ENCODE measurements at regions of chr9 and their contacts with region 1.

Region 1: GRCh38 chr9:8456344-8456743 is 656.8 kb upstream of the DMAC1 start:
- DNase-seq: no peak
- H3K4me3 ChIP-seq: no peak overlapping the region
- H3K27ac ChIP-seq: no peak overlapping the region
- H3K4me1 ChIP-seq: no peaks in the 10 kb centered on the region
- H3K27me3 ChIP-seq: no peaks in the 10 kb centered on the region
- CTCF ChIP-seq: no peak
- POLR2A ChIP-seq: no peak

Region 2: DNA sequence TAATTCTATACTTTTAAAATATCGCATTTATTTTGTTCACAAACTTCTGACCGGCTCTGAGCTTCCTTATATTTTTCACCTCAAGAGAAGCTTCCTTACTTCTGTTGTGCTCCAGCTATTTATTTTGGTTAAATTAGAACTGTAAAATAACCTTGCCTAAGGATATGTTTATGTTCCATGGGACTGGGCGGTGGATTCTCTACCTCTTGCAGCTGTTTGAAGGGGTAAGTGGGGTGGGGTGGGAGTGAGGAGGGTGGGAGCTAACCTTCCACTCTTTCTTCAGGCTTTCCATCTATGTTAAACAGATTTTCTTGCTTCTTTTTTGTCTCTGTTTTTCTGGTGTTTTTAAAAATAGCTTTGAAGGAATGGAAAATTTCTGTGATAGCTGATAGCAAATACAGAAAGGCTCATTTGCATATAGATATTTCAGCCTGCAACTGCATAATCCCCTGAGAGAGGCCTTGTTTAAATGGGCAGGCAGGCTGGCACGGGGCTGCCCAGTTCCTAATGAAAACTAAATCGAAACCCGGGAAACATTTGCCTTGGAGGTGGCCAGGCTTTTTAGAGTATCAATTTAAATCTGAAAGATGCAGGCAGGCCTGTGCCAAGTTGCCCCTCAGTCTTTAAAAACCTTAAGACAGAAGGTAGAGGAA is 534.7 kb before region 1 on chr9:
- CTCF ChIA-PET with region 1: no interaction called
- POLR2A ChIA-PET with region 1: no interaction called
- dilution Hi-C with region 1: no loop called
- intact Hi-C with region 1: no loop called
- DNase-seq: no peak
- H3K4me3 ChIP-seq: no peak overlapping the region
- H3K27ac ChIP-seq: no peak overlapping the region
- H3K4me1 ChIP-seq: no peaks in the 10 kb centered on the region
- H3K27me3 ChIP-seq: no peaks in the 10 kb centered on the region
- CTCF ChIP-seq: no peak
- POLR2A ChIP-seq: no peak

Region 3: GRCh38 chr9:8254541-8254940 is 201.8 kb before region 1 on chr9:
- CTCF ChIA-PET with region 1: no interaction called
- POLR2A ChIA-PET with region 1: no interaction called
- dilution Hi-C with region 1: no loop called
- intact Hi-C with region 1: no loop called
- DNase-seq: no peak
- H3K4me3 ChIP-seq: no peak overlapping the region
- H3K27ac ChIP-seq: no peak overlapping the region
- H3K4me1 ChIP-seq: no peaks in the 10 kb centered on the region
- H3K27me3 ChIP-seq: no peaks in the 10 kb centered on the region
- CTCF ChIP-seq: no peak
- POLR2A ChIP-seq: no peak

Region 4: DNA sequence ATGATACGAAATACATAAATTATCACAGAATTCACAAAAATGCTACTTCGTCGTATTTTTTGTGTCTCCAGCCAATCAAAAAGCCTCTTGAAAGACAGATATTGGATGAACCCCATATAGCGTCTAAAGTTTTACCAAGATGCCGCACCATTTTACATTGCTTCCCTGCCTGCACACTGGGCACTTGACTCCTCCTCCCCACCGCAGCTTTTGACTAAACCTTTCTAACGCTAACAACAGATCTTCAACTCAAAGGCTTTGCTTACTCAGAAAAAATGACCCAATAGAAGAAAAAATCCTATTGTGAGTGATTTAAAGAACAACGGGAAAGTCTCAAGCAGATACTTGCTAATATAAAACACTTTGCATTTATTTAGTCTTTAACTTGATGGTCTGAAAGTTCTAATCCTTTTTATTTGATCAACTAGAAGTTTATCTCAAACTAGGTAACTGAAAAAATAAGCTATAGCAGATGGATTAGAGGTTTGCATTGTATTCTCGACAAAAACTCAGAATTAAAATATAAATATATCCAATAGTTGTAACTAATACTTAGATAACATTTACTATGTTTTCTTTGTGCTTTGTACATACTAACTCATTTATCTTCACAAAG is 47.7 kb before region 1 on chr9:
- CTCF ChIA-PET with region 1: no interaction called
- POLR2A ChIA-PET with region 1: no interaction called
- dilution Hi-C with region 1: no loop called
- intact Hi-C with region 1: loop called (anchors 5 kb)
- DNase-seq: no peak
- H3K4me3 ChIP-seq: no peak overlapping the region
- H3K27ac ChIP-seq: no peak overlapping the region
- H3K4me1 ChIP-seq: no peaks in the 10 kb centered on the region
- H3K27me3 ChIP-seq: no peaks in the 10 kb centered on the region
- CTCF ChIP-seq: no peak
- POLR2A ChIP-seq: no peak